CD4-positive, alpha-beta memory T cell (primary cell): ENCODE measurements at regions of chr12 and their contacts with region 1.

Region 1: DNA sequence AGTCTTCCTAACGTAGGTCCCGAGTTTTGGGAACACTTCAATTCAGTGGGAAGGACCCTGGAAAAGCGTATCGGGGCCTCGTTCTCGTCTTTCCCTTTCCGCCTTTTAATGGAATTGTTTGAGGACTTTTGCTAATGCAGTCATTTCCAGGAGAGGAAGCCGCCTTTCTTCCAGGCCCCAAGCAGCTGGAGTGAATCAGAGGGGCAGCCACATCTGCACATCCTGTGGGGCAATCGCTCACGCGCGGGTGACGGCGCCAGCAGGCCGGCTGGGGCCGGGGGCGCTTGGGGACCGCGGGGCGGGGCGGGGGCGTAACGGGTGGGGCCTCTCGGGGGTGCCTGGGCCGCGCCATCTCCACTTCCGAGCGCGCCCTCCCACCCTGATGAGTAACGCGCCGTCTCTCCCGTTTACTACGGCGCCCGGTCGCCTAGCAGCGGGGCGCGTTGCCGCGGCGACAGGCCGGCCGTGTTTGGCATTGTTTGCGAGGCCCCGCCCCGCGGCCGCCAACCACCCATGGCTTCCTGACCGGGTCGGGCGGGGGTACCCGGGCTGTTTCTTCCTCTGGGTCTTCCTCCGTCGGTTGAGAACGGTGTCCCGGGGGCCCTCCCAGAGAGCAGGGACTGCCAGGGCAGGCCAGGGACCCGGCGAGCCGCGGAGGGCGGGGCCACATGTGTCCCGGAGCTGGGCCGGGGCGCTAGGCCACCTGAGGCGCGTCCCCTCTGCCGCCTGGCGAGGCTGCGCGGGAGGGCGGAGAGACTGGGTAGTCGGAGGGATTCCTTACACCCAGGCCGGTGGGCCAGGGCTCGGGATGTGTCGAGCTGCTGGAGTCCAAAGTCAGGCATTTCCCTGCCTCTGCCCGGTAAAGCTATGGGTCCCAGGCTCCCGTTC is 2.3 kb downstream of the GSG1 start:
- DNase-seq: peak; percentile 95 to 97 (median 96)
- H3K4me3 ChIP-seq: peak overlapping the region; percentile 44 to 69
- H3K4me3 Mint-ChIP-seq: peak overlapping the region; percentile 85 to 93 (median 88)
- H3K27ac ChIP-seq: peak overlapping the region; percentile 93
- H3K27ac Mint-ChIP-seq: peak overlapping the region; percentile 93 to 99 (median 99)
- H3K4me1 ChIP-seq: peaks cover 40% of the 10 kb centered on the region
- H3K4me1 Mint-ChIP-seq: peaks cover 38 to 58% (median 45%) of the 10 kb centered on the region in 4 donors
- H3K27me3 ChIP-seq: no peaks in the 10 kb centered on the region
- H3K27me3 Mint-ChIP-seq: no peaks in the 10 kb centered on the region

Region 2: GRCh38 chr12:12803186-12803585 is 297.9 kb before region 1 on chr12:
- CTCF ChIA-PET with region 1: no interaction called
- POLR2A ChIA-PET with region 1: no interaction called
- intact Hi-C with region 1: loop called (anchors 2 kb)
- DNase-seq: peak; percentile 3 to 74 (median 15)
- H3K4me3 ChIP-seq: no peak overlapping the region
- H3K4me3 Mint-ChIP-seq: peak overlapping the region in 6 of 8 donors; percentile 11 to 72 (median 32)
- H3K27ac ChIP-seq: no peak overlapping the region
- H3K27ac Mint-ChIP-seq: peak overlapping the region; percentile 57 to 97 (median 87)
- H3K4me1 ChIP-seq: peaks cover 42% of the 10 kb centered on the region
- H3K4me1 Mint-ChIP-seq: peaks cover 23 to 59% (median 44%) of the 10 kb centered on the region in 4 donors
- H3K27me3 ChIP-seq: no peaks in the 10 kb centered on the region
- H3K27me3 Mint-ChIP-seq: no peaks in the 10 kb centered on the region

Region 3: DNA sequence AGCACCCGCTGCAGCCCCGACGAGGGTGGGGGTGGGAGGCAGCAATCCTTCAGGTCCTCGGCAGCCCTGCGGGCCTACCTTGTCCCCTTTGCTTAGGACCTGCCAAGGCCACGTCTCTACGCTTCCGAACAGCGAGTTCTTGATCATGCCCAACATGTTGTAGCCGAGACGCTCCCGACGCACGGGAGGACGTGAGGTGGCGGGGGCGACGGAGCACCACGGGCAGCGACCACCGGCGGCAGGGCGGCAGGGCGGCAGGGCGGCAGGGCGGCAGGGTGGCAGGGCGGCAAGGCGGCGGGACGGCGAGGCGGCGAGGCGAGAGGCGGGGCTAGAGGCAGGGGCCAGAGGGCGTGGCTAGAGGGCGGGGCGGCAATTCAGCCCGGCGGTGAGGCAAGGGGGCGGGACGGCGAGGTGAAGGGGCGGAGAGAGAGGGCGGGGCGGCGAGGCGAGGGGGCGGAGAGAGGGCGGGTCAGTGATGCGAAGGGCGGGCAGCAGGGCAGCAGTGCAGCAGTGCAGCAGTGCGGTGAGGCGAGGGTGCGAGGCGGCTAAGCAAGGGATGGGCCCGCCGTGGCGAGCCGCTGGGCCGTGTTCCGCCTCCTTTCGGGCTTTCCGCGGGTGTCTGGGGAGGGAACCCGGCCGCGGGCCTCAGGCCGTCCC is 101.0 kb before region 1 on chr12 and contains the start of gene HEBP1:
- CTCF ChIA-PET with region 1: no interaction called
- POLR2A ChIA-PET with region 1: interaction called, 5 read pairs
- intact Hi-C with region 1: loop called (anchors 1 kb)
- DNase-seq: peak; percentile 92 to 95 (median 93)
- H3K4me3 ChIP-seq: peak within 1 kb of the TSS; percentile 61 to 81
- H3K4me3 Mint-ChIP-seq: peak within 1 kb of the TSS; percentile 82 to 97 (median 90)
- H3K27ac ChIP-seq: peak within 1 kb of the TSS; percentile 64
- H3K27ac Mint-ChIP-seq: peak within 1 kb of the TSS; percentile 82 to 95 (median 90)
- H3K4me1 ChIP-seq: peaks cover 26% of the 10 kb centered on the region
- H3K4me1 Mint-ChIP-seq: peaks cover 20 to 44% (median 30%) of the 10 kb centered on the region in 4 donors
- H3K27me3 ChIP-seq: no peaks in the 10 kb centered on the region
- H3K27me3 Mint-ChIP-seq: no peaks in the 10 kb centered on the region
- total RNA-seq, gene HEBP1: 11.3 to 13.9 TPM

Region 4: DNA sequence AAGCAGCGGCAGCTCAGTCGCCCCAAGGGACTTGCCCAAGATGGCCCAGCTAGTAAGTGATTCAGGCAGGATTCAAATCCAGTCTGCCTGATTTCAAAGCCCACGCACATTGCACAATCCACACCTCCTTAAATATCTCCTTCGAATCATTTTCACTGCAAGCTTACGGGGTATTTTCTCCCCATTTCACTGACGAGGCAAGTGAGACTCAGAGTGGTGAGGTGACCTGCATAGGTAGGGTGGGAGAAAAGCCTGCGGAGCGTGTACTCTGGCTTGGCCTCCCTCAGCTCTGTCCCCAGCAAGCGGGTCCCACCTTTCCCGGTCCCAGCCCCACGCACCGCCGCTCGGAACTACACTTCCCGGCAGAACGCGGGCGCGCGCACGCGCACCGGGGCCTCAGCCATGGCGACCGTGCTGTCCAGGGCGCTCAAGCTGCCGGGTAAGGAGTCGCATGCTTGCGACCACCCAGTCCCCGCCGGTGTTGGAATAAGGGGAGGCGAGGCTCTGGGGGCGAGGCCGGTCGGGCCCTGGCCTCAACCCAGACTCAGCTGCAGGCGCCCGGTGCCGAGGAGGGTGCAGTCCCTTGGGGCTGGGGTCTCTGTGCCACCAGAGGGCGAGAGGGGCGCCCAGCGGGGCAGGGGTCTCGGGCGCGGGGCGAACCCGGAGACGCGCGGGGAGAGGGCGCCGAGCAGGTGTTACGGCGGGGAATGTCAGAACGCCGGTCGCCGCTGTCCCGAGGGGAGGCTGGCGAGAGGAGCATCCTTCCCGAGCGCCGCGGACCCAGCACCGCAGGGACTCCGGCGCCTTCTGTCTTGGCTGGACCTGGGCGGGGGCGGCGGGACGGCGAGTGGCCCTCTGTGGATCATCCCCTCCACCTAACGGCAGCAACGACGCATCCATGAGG is 56.9 kb before region 1 on chr12 and contains the start of gene FAM234B:
- CTCF ChIA-PET with region 1: interaction called, 5 read pairs
- POLR2A ChIA-PET with region 1: no interaction called
- intact Hi-C with region 1: loop called (anchors 1 kb)
- DNase-seq: peak; percentile 57 to 68 (median 59)
- H3K4me3 ChIP-seq: peak within 1 kb of the TSS; percentile 42 to 84
- H3K4me3 Mint-ChIP-seq: peak within 1 kb of the TSS; percentile 82 to 89 (median 87)
- H3K27ac ChIP-seq: peak within 1 kb of the TSS; percentile 43
- H3K27ac Mint-ChIP-seq: peak within 1 kb of the TSS in 6 of 7 donors; percentile 36 to 88 (median 72)
- H3K4me1 ChIP-seq: peaks cover 13% of the 10 kb centered on the region
- H3K4me1 Mint-ChIP-seq: peaks cover 4 to 9% (median 6%) of the 10 kb centered on the region in 4 donors
- H3K27me3 ChIP-seq: no peaks in the 10 kb centered on the region
- H3K27me3 Mint-ChIP-seq: peaks cover 0 to 9% of the 10 kb centered on the region in 2 donors
- total RNA-seq, gene FAM234B: 3.9 to 4.0 TPM

Region 5: GRCh38 chr12:13165617-13166041 is 64.5 kb after region 1 on chr12:
- CTCF ChIA-PET with region 1: no interaction called
- POLR2A ChIA-PET with region 1: interaction called, 9 read pairs
- intact Hi-C with region 1: loop called (anchors 5 kb)
- DNase-seq: peak; percentile 51 to 80 (median 55)
- H3K4me3 ChIP-seq: peak overlapping the region in 1 of 2 donors; percentile 19
- H3K4me3 Mint-ChIP-seq: peak overlapping the region in 6 of 8 donors; percentile 19 to 68 (median 45)
- H3K27ac ChIP-seq: no peak overlapping the region
- H3K27ac Mint-ChIP-seq: peak overlapping the region in 6 of 7 donors; percentile 26 to 77 (median 62)
- H3K4me1 ChIP-seq: peaks cover 23% of the 10 kb centered on the region
- H3K4me1 Mint-ChIP-seq: peaks cover 15 to 30% (median 21%) of the 10 kb centered on the region in 4 donors
- H3K27me3 ChIP-seq: no peaks in the 10 kb centered on the region
- H3K27me3 Mint-ChIP-seq: peaks cover 2 to 4% of the 10 kb centered on the region in 2 donors

Region 6: DNA sequence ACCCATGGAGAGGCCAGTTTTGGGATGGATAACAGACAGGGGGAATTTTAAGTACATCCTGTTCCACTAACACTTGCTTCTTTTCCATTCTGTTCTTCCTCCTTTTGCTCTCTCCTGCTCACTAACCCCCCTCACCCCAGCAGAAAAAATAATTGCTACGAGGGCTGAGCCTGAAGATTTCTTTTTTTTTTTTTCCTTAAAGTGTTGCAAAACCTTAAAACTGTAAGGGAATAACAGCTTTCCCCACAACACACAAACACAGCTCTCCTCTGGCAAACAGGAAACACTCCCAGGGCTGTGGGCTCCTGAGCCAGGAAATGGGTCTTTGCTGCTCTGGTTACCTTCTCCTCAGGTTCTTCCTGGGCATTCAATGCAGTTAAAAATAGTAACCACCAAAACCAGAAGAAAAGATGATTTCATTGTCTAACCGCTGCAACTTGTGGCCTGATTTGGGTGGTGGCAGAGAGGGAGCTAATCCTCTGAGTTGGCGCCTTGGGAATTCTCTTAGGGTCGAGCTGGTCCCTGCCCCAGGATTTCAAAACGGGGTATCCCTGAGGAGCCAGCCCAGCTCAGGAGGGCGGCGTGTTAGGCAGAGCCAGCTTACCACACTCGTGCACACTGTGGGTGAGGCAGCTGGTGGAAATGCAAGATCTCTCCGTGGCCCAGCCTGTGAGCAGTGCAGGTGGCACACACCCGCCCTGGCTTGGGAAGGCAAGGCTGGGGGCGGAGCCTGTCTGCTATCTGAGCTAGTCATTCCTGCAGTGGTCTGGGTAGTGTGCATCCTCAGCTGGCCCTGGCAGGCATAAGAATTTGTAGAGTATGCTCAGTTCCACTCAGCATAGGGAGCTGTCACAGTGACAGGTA is 78.3 kb after region 1 on chr12:
- CTCF ChIA-PET with region 1: interaction called, 3 read pairs
- POLR2A ChIA-PET with region 1: interaction called, 12 read pairs
- intact Hi-C with region 1: no loop called
- DNase-seq: peak; percentile 34 to 56 (median 39)
- H3K4me3 ChIP-seq: peak overlapping the region in 1 of 2 donors; percentile 28
- H3K4me3 Mint-ChIP-seq: peak overlapping the region; percentile 71 to 89 (median 78)
- H3K27ac ChIP-seq: no peak overlapping the region
- H3K27ac Mint-ChIP-seq: peak overlapping the region; percentile 63 to 87 (median 72)
- H3K4me1 ChIP-seq: peaks cover 17% of the 10 kb centered on the region
- H3K4me1 Mint-ChIP-seq: peaks cover 15 to 28% (median 23%) of the 10 kb centered on the region in 4 donors
- H3K27me3 ChIP-seq: no peaks in the 10 kb centered on the region
- H3K27me3 Mint-ChIP-seq: peaks cover 0 to 2% of the 10 kb centered on the region in 2 donors

Region 7: GRCh38 chr12:13196130-13196921 is 95.2 kb after region 1 on chr12 and contains the start of gene EMP1:
- CTCF ChIA-PET with region 1: interaction called, 3 read pairs
- POLR2A ChIA-PET with region 1: interaction called, 11 read pairs
- intact Hi-C with region 1: loop called (anchors 1 kb)
- DNase-seq: peak; percentile 60 to 95 (median 76)
- H3K4me3 ChIP-seq: peak within 1 kb of the TSS in 1 of 2 donors; percentile 54
- H3K4me3 Mint-ChIP-seq: peak within 1 kb of the TSS; percentile 80 to 93 (median 88)
- H3K27ac ChIP-seq: peak within 1 kb of the TSS; percentile 35
- H3K27ac Mint-ChIP-seq: peak within 1 kb of the TSS; percentile 74 to 96 (median 84)
- H3K4me1 ChIP-seq: peaks cover 19% of the 10 kb centered on the region
- H3K4me1 Mint-ChIP-seq: peaks cover 19 to 32% (median 25%) of the 10 kb centered on the region in 4 donors
- H3K27me3 ChIP-seq: no peaks in the 10 kb centered on the region
- H3K27me3 Mint-ChIP-seq: peaks cover under 1 to 3% of the 10 kb centered on the region in 2 donors
- total RNA-seq, gene EMP1: 4.5 to 5.8 TPM